AG04449 (cell line): ENCODE measurements at regions of chr20 and their contacts with region 1.

Region 1: DNA sequence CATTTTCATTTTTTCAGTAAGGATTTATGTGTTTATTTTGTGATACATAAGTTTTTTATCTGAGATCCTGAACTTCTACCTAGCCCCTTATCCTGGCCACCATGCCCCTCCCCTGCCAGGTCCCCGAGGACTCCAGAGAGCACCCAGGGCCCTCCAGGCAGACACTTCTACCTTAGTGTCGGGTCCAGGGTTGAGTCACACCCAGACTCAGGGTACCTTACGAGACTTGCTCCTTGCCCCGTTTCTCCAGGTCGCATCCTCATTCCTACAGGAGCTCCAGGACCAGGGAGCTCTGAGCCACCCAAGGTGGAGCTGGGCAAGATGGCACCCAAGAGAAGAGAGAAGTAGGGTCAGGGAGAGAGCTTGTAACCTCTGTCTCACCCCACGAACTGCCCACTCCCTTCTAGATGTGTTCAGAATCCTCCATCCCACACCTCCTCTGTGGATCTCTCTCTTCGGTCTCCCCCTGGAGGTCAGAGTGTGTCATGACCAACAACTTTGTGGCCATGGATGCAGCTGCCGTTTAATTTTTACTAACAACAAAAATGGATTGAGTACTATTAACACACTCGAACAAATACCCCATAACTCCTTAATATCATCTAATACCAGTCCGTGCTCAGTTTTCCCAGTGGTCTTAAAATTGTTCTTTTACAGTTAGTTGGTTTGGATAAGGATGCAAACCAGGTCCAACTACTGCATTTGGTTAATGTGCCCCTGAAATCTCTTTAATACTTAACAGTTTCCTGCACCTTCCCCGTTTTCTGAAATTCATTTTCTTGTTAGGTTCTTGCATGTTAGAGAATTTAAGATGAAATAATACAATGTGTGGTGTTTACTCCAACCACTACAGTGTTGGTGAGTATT is 130.6 kb upstream of the INSM1 start:
- DNase-seq: no peak
- H3K4me3 ChIP-seq: no peak overlapping the region
- CTCF ChIP-seq: peak; percentile 76

Region 2: DNA sequence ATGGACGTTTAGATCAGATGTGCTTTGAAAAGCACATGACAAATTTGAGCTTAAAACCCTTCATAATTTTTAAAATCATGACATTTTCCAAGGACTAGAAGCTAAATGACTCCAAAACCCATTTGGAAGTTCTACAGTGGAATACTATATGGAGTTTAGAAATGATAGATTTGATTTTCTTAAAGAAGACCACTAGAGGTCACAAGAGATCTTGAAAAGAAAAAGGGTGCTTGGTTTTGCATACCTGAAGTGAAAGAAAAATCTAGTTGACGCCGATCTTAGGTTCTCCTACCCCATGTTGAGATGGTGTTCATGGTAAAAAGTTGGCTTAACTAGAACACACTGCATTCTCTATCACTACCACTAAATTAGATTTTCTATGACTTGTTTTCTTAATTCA is 153.5 kb before region 1 on chr20:
- CTCF ChIA-PET with region 1: interaction called, 25 read pairs
- POLR2A ChIA-PET with region 1: no interaction called
- DNase-seq: no peak
- H3K4me3 ChIP-seq: no peak overlapping the region
- CTCF ChIP-seq: no peak

Region 3: GRCh38 chr20:20225325-20226043 is 11.8 kb before region 1 on chr20:
- CTCF ChIA-PET with region 1: interaction called, 18 read pairs
- POLR2A ChIA-PET with region 1: no interaction called
- DNase-seq: no peak
- H3K4me3 ChIP-seq: no peak overlapping the region
- CTCF ChIP-seq: no peak